Right cardiac atrium (tissue), 5 donors: ENCODE measurements at regions of chr17 and their contacts with region 1.

Region 1: DNA sequence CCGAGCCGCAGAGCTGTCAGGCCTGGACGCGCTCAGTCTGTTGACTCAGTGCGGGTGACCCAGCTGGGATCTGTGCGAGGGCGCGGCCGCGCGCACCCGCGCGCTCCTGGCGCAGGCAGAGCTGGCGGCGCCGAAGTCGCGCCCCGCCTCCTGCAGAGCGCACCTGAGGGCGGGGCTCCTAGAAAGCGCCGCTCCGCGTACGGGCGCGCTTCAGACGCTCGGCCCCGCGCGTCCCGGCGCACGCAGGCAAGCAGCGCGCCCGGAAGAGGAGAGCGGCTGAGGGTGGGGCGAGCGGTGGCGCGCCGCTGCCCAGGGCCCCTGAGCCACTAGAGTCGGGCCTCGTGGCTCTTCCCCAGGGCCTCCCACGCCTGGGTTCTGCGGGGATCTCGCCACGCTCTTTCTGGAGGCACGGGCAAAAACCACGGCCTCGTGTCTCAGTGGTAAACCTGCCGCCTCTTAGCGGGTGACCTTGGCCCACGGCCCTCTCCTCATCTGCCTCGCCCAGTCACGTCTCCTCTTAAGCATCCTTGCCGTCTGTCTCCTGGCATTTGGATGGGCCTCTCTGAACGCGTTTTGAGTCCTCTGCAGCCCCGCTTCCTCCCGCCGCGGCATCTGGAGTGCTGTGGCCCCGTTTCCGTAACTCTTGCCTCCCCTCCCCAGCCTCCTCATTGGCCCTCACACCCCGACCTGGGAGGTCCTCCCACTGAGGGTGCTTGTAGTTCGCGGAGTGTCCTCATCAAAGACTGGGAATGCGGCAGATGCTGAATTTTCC is at the start of gene ABCA5:
- DNase-seq: peak; percentile 82 to 91 (median 90)
- ATAC-seq: peak; percentile 98
- H3K4me3 ChIP-seq: peak within 1 kb of the TSS; percentile 46
- H3K27ac ChIP-seq: peak within 1 kb of the TSS; percentile 48
- H3K4me1 ChIP-seq: no peaks in the 10 kb centered on the region
- H3K27me3 ChIP-seq: no peaks in the 10 kb centered on the region
- total RNA-seq, gene ABCA5: 16.1 to 20.7 (median 19.0) TPM

Region 2: DNA sequence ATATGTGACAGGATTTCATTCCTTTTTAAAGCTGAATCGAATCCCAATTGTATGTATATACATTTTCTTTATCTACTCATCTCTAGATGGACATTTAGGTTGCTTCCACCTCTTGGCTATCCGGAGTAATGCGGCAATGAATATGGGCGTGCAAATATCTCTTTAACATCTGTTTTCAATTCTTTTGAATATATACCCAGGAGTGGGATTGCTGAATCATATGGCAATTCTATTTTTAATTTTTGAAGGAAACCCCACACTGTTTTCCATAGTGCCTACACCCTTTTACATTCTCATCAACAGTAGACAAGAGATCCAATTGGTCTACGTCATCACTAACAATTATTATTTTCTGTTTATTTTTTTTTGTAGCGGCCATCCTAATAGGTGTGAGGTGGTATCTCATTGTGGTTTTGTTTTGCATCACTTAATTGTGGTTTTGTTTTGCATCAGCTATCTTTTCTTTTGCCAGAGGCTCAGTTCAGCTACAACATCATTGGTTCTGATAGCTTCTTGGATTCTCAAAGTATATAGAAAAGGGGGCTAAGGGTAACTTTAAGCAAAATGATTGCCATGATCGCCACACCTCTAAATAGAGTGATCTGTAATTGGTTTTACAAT is 61.7 kb after region 1 on chr17:
- intact Hi-C with region 1: no loop called
- DNase-seq: no peak
- ATAC-seq: no peak
- H3K4me3 ChIP-seq: no peak overlapping the region
- H3K27ac ChIP-seq: no peak overlapping the region
- H3K4me1 ChIP-seq: no peaks in the 10 kb centered on the region
- H3K27me3 ChIP-seq: no peaks in the 10 kb centered on the region

Region 3: DNA sequence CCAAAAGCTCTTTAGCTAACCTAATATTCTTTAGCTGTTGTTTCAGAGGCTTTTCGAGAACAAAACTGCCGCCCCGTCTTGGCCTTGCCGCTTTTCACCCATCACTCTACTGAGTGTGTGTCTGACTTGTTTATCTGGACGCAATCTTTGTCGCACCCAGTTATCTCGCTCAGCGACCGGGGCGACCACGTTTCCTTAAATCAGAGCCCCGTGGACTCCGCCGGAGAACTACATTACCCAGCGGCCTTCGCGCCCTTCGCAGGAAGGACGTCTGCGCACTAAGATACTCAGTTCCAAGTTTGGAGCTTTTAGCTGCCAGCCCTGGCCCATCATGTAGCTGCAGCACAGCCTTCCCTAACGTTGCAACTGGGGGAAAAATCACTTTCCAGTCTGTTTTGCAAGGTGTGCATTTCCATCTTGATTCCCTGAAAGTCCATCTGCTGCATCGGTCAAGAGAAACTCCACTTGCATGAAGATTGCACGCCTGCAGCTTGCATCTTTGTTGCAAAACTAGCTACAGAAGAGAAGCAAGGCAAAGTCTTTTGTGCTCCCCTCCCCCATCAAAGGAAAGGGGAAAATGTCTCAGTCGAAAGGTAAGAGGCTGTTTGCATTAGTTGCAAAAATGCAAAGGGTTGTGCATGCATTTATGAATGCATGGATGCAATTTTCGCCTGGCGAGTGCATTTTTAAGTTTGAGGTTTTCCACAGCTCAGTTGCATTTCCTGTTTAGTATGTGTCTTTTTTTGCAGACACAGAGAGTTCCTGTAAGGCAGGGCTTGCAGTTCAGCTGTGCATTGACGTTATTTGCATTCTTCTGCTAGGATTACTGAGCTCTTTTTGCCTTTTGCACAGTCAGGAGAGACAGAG is 87.4 kb after region 1 on chr17 and contains the start of gene MAP2K6:
- intact Hi-C with region 1: loop called in 1 of 4 experiments (anchors 10 kb)
- DNase-seq: peak; percentile 86 to 93 (median 91)
- ATAC-seq: peak; percentile 98 to 99
- H3K4me3 ChIP-seq: peak within 1 kb of the TSS; percentile 73
- H3K27ac ChIP-seq: no peak within 1 kb of the TSS
- H3K4me1 ChIP-seq: no peaks in the 10 kb centered on the region
- H3K27me3 ChIP-seq: no peaks in the 10 kb centered on the region
- total RNA-seq, gene MAP2K6: 2.1 to 4.1 (median 3.2) TPM